ENCODE measurements at regions of chr15 and their contacts with region 1.

Region 1: GRCh38 chr15:97909291-97909891 is 51.1 kb upstream of the ARRDC4 start:
- DNase-seq: peak; percentile 43 to 78
- ATAC-seq: peak; percentile 87 to 94 (median 92)
- H3K4me3 ChIP-seq: no peak overlapping the region
- H3K27ac ChIP-seq: no peak overlapping the region
- H3K4me1 ChIP-seq: no peaks in the 10 kb centered on the region
- H3K27me3 ChIP-seq: peaks cover 0 to 20% (median 1%) of the 10 kb centered on the region in 3 donors
- CTCF ChIP-seq: peak; percentile 92

Region 2: DNA sequence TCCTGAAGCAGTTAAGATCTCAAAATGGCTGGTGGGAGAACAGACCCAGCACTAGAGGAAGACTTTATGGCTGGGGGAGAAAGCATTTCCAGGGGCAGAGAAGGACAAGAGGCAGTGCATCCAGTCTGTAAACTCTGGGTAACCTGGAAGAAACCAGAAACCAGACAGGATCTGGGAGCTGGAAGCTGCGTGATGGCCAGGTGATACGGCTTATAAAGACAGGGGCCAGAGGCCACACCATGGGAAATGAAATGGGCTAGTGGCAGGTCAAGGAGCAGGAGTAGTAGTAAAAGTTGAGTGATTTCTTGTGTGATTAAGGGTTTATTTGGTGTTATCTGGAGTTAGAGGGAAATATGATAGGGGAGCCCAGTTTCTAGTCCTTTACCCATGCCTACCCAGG is 93.6 kb before region 1 on chr15:
- intact Hi-C with region 1: no loop called
- DNase-seq: no peak
- ATAC-seq: no peak
- H3K4me3 ChIP-seq: no peak overlapping the region
- H3K27ac ChIP-seq: no peak overlapping the region
- H3K4me1 ChIP-seq: no peaks in the 10 kb centered on the region
- H3K27me3 ChIP-seq: no peaks in the 10 kb centered on the region
- CTCF ChIP-seq: no peak

Region 3: GRCh38 chr15:98085003-98085639 is 175.7 kb after region 1 on chr15:
- intact Hi-C with region 1: loop called (anchors 1 to 2 kb)
- DNase-seq: no peak
- ATAC-seq: no peak
- H3K4me3 ChIP-seq: no peak overlapping the region
- H3K27ac ChIP-seq: no peak overlapping the region
- H3K4me1 ChIP-seq: no peaks in the 10 kb centered on the region
- H3K27me3 ChIP-seq: no peaks in the 10 kb centered on the region
- CTCF ChIP-seq: peak; percentile 80

Region 4: GRCh38 chr15:98177924-98178592 is 268.7 kb after region 1 on chr15:
- intact Hi-C with region 1: loop called (anchors 5 kb)
- DNase-seq: no peak
- ATAC-seq: peak in 3 of 4 donors; percentile 68 to 73 (median 71)
- H3K4me3 ChIP-seq: no peak overlapping the region
- H3K27ac ChIP-seq: no peak overlapping the region
- H3K4me1 ChIP-seq: no peaks in the 10 kb centered on the region
- H3K27me3 ChIP-seq: peaks cover 2 to 18% (median 3%) of the 10 kb centered on the region in 3 donors
- CTCF ChIP-seq: peak; percentile 55

Region 5: DNA sequence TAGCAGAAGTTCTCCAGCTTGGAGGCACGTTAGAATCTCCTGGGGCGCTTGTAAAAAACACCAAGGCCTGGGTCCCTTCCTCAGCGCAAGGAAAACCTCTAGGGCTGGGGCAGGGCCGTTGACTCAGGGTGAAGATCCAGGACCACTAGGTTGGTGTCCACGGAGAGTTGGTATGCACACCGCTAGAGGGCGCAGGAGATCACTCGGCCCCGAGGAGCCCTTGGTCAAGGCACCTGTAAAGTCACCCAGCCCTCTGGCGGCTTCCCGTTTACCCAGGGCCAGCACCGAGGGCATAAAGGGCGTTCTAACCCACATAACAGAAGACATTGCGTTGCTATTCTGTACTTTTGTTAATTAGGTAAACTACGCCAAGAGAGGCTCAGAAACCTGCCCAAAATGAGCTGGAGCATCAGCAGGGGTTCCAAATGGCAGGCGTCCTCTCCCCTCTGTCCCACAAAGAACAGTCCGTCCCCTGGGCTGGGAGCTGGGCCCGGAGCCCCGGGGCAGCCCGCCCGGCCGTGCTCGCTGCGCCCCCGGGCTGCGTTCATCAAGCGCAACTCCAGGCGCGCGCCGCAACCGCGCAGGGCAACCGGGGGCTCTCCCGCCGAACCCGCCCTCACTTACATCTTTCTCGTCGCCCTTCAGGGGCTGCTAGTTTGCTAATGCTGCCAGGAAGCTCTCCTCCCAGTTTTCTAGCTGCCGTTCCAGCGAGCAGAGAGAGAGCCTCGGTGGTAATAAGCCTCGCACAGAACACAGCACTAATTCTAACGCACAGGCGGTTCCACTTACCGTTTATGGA is 383.2 kb after region 1 on chr15:
- intact Hi-C with region 1: loop called (anchors 10 kb)
- DNase-seq: peak; percentile 16 to 63
- ATAC-seq: peak in 1 of 4 donors; percentile 41
- H3K4me3 ChIP-seq: no peak overlapping the region
- H3K27ac ChIP-seq: no peak overlapping the region
- H3K4me1 ChIP-seq: no peaks in the 10 kb centered on the region
- H3K27me3 ChIP-seq: peaks cover 0 to 29% (median 7%) of the 10 kb centered on the region in 3 donors
- CTCF ChIP-seq: no peak

Region 6: GRCh38 chr15:98382139-98382538 is 472.7 kb after region 1 on chr15:
- intact Hi-C with region 1: no loop called
- DNase-seq: no peak
- ATAC-seq: no peak
- H3K4me3 ChIP-seq: no peak overlapping the region
- H3K27ac ChIP-seq: no peak overlapping the region
- H3K4me1 ChIP-seq: no peaks in the 10 kb centered on the region
- H3K27me3 ChIP-seq: peaks cover 0 to 8% (median 8%) of the 10 kb centered on the region in 3 donors
- CTCF ChIP-seq: no peak

Region 7: DNA sequence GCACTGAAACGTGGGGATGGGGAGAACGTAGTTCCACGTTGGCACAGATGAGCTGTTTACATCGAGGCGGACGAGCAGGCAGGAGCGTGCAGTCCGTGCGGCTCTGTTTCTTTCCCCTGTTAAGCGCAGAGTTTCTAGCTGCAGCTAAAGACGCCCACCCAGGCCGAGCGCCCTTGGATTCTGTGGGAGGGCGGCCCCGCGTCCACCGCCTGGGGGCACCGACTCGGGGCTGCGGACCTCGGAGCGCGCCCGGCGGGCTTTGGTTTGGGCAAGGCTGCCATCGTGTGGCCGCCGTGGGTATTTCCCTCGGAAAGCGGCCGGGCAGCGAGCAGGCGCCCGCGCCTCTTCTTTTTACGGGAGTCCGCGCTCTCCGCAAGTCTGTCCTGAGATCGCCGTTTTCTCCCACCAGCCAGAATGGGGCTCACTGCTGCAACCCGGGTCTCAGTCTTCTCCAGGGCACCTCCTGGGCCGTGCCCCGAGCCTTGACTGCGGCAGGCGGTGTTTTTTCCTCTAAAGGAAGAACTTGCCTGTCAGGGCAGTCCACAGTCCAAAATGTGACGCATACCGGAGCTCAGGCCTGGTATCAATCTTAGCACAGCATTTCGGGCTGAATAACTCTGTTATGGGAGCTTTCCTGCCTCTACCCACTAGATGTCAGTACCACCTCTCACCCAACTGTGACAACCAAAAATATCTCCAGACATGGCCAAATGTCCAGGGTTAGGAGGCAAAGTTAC is 519.0 kb after region 1 on chr15:
- intact Hi-C with region 1: loop called (anchors 5 to 10 kb)
- DNase-seq: peak; percentile 72 to 83
- ATAC-seq: peak; percentile 66 to 90 (median 82)
- H3K4me3 ChIP-seq: peak overlapping the region; percentile 58
- H3K27ac ChIP-seq: no peak overlapping the region
- H3K4me1 ChIP-seq: no peaks in the 10 kb centered on the region
- H3K27me3 ChIP-seq: peaks cover 0 to 62% (median 8%) of the 10 kb centered on the region in 3 donors
- CTCF ChIP-seq: peak; percentile 76

Measured in psoas muscle (tissue), 8 donors.